Activated CD4-positive, alpha-beta memory T cell treated with anti-CD3 and anti-CD28 coated beads, Interleukin-2, amount 10 ng/mL, durations not matched to agents 7 days and 5 days (primary cell): ENCODE measurements at regions of chr16 and their contacts with region 1.

Region 1: DNA sequence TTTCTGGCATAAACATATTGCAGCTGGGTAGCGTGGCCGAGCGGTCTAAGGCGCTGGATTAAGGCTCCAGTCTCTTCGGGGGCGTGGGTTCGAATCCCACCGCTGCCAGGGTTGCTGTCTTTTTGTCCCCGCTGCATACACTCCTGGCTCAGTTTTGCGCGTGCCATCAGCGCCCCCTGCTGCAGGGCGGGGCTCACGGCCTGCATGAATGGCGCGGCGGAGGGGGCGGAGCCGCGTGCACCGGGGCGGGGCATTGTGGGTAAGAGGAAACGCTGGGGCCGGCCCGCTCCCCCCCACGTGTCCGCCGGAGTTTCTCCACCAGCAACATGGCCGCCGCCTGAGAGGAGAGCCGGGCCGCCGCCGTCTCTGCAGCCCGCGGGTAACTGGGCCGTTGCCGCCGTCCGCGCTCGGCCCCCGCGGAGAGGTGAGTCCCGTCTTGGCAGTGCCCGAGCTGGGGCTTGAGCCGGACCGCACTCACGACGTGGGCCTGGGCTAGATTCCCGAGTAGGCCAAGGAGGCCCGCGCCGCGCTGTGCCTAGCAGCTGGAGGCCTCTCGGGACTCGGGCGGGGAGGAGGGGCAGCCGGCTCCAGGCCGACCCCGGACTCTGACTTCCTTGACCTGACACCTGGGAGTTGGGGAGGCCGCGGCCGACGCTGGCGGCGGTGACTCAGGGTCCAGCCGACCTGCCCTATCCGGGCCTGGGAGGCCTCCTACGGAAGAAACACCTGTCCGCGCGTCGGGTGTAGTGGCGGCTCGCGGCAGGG is at the start of gene POLR3E:
- DNase-seq: peak; percentile 100
- H3K4me3 Mint-ChIP-seq: peak within 1 kb of the TSS; percentile 91
- H3K27ac Mint-ChIP-seq: peak within 1 kb of the TSS; percentile 98
- H3K4me1 Mint-ChIP-seq: peaks cover 41% of the 10 kb centered on the region
- H3K27me3 Mint-ChIP-seq: no peaks in the 10 kb centered on the region
- total RNA-seq, gene POLR3E: 50.7 TPM

Region 2: DNA sequence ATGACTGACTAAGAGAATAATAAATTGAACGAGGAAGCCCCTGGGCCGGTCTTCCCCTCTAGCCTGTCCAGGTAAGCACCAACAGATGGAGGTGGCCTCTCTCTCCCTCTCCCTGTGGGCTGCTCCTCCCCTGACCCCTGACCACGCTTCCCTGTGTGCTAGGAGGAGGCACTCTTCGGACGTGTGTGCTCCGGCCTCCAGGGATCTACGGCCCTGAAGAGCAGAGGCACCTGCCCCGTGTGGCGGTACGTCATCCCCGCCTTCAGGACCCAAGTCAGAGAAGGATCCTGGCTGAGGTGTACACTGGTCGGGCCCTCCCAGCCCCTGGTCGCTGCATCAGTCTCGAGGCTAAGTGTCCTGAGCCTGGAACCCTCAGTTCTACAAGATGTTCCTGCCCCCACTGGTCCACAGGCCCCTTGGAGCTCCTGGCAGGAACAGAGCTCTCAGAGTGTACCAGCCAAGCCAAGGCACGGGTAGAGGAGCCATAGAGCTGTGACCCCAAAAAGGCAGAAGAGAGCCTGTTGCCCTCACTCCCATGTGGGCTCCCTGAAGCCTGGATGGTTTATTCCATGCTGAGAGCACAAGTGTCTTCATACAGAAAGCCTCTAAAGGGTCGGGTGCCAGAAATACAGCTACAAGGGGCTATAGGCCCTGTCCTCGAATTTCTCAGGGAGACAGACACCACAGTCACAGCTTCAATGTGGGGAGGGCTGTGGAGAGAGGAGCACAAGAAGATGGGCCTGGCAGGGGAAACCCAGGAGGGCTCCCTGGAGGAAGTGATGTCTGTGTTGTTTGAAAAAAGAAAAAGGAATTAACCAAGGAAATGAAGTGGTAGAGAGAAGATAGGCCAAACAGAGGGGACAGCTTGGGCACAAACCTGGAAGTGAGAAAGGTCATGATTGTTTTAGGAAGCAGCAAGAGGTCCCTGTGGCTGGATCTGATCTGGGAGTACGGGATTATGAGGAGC is 119.0 kb before region 1 on chr16:
- CTCF ChIA-PET with region 1: no interaction called
- POLR2A ChIA-PET with region 1: no interaction called
- DNase-seq: no peak
- H3K4me3 Mint-ChIP-seq: no peak overlapping the region
- H3K27ac Mint-ChIP-seq: no peak overlapping the region
- H3K4me1 Mint-ChIP-seq: no peaks in the 10 kb centered on the region
- H3K27me3 Mint-ChIP-seq: no peaks in the 10 kb centered on the region

Region 3: DNA sequence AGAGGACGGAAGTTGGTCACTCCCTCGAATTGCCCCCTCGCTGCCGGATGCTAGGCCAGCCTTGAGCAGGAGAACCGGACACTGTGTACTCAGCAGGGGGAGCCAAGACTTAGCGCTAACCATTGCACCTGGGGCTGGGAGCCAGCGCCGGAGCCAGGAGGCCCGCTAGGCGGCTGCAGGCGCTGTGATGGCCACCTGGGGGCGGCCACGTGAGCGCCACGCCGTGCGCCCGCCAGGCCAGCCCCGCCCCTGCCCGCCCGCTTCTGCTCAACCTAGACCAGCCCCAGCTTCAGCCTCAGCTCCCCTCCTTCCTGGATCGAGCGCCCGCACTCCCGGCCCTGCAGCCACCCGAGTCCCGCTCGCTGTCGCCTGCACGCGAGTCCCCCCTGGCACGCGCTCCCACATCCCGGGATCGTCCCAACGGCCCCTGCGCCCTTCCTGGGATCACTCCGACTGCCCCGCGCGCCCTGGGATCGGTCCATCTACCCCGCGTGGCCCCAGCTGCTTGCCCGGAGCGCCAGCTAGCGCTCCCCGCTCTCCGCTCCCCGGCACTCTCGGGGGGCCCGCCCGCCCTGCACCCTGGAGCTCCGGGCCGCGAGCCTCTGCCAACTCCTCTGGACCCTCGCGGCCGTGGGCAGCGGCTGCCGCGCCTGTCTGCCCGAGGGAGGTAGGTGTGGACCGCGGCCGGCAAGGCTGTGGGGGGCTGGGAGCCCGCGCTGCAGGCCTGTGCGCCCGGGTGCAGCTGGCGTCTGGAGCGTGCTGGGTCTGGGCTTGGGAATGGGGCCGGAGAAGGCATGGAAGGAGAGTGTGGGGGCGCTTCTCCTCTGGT is 91.1 kb before region 1 on chr16 and contains the start of gene EEF2K:
- CTCF ChIA-PET with region 1: interaction called, 81 read pairs
- POLR2A ChIA-PET with region 1: interaction called, 49 read pairs
- DNase-seq: peak; percentile 89
- H3K4me3 Mint-ChIP-seq: peak within 1 kb of the TSS; percentile 99
- H3K27ac Mint-ChIP-seq: peak within 1 kb of the TSS; percentile 83
- H3K4me1 Mint-ChIP-seq: peaks cover 44% of the 10 kb centered on the region
- H3K27me3 Mint-ChIP-seq: no peaks in the 10 kb centered on the region
- total RNA-seq, gene EEF2K: 22.1 to 24.8 TPM

Region 4: GRCh38 chr16:22240023-22240710 is 57.1 kb before region 1 on chr16:
- CTCF ChIA-PET with region 1: interaction called, 8 read pairs
- POLR2A ChIA-PET with region 1: interaction called, 13 read pairs
- DNase-seq: no peak
- H3K4me3 Mint-ChIP-seq: no peak overlapping the region
- H3K27ac Mint-ChIP-seq: peak overlapping the region; percentile 97
- H3K4me1 Mint-ChIP-seq: peaks cover 32% of the 10 kb centered on the region
- H3K27me3 Mint-ChIP-seq: no peaks in the 10 kb centered on the region

Region 5: GRCh38 chr16:22308824-22309520 is 11.7 kb after region 1 on chr16:
- CTCF ChIA-PET with region 1: interaction called, 10 read pairs
- POLR2A ChIA-PET with region 1: interaction called, 4 read pairs
- DNase-seq: no peak
- H3K4me3 Mint-ChIP-seq: no peak overlapping the region
- H3K27ac Mint-ChIP-seq: no peak overlapping the region
- H3K4me1 Mint-ChIP-seq: no peaks in the 10 kb centered on the region
- H3K27me3 Mint-ChIP-seq: no peaks in the 10 kb centered on the region

Region 6: DNA sequence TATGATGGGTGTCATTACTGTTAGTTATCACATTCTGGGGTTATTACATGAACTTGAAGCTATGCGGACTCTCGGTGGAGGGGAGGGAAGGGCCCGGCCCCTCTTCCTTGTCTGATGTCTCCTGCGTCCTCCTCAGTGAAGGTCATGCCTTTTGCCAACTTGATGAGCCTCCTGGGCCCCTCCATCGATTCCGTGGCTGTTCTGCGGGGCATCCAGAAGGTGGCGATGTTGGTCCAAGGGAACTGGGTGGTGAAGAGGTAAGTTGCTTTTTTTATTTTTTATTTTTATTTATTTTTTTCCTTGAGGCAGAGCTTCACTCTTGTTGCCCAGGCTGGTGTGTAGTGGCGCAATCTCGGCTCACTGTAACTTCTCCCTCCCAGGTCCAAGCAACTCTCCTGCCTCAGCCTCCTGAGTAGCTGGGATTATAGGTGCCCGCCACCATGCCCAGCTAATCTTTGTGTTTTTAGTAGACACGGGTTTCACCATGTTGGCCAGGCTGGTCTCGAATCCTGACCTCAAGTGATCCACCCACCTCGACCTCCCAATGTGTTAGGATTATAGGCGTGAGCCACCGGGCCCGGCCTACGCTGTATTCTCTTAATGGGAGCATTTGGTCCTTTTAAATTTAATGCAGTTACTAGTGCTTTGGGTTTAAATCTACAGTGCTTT is 21.5 kb after region 1 on chr16:
- CTCF ChIA-PET with region 1: interaction called, 11 read pairs
- POLR2A ChIA-PET with region 1: interaction called, 3 read pairs
- DNase-seq: peak; percentile 70
- H3K4me3 Mint-ChIP-seq: no peak overlapping the region
- H3K27ac Mint-ChIP-seq: no peak overlapping the region
- H3K4me1 Mint-ChIP-seq: peaks cover 4% of the 10 kb centered on the region
- H3K27me3 Mint-ChIP-seq: no peaks in the 10 kb centered on the region

Region 7: DNA sequence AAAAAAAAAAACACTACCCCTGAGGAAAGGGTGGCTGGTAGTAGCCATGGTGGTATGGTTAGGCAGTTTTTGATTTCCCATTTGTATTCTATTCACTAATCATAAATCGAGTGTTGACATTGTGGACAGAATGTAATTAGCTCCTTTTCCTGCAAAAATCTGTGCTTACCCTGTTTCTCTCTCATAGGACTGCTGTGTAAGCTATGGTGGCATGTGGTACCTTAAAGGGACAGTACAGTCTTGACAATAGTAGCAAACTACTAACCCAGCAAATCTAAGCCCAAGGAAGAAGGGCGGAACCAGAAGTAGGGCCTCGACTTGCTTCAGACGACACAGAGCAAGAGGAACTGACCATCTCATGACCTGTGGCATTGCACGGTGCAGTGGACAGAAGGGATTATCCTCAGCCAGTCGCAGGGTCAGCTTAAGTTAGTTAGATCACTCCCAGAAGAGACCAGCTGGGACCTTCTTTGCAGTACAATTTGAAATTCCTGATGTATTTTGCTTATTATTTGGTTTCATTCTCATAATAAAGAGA is 36.2 kb after region 1 on chr16:
- CTCF ChIA-PET with region 1: no interaction called
- POLR2A ChIA-PET with region 1: no interaction called
- DNase-seq: no peak
- H3K4me3 Mint-ChIP-seq: no peak overlapping the region
- H3K27ac Mint-ChIP-seq: no peak overlapping the region
- H3K4me1 Mint-ChIP-seq: peaks cover 9% of the 10 kb centered on the region
- H3K27me3 Mint-ChIP-seq: no peaks in the 10 kb centered on the region

Region 8: GRCh38 chr16:22424161-22424937 is 127.1 kb after region 1 on chr16:
- CTCF ChIA-PET with region 1: no interaction called
- POLR2A ChIA-PET with region 1: no interaction called
- DNase-seq: no peak
- H3K4me3 Mint-ChIP-seq: no peak overlapping the region
- H3K27ac Mint-ChIP-seq: no peak overlapping the region
- H3K4me1 Mint-ChIP-seq: no peaks in the 10 kb centered on the region
- H3K27me3 Mint-ChIP-seq: no peaks in the 10 kb centered on the region

Region 9: DNA sequence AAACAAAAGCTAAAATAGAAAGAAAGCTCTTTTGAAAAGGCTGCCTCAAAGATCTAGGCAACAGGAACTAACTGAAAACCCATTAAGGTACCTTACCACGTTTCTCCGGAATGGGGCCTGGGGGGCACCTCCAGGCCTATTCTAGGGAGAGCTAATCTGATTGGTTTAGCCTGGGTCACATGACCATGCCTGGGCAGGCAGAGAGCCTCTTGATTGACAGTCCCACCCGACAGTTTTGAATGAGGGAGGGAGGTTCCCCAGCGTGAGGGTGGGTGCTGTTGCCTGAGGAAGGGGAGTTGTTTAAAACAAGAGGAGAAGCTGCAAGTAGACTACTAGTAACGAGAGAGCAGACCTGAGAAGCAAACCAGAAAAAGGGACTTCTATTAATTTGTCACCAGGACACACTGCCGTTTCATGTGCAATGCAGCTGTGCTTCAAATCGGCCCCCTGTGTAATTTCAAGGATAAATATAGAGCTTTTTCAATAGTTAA is 373.3 kb after region 1 on chr16:
- CTCF ChIA-PET with region 1: no interaction called
- POLR2A ChIA-PET with region 1: no interaction called
- DNase-seq: no peak
- H3K4me3 Mint-ChIP-seq: no peak overlapping the region
- H3K27ac Mint-ChIP-seq: no peak overlapping the region
- H3K4me1 Mint-ChIP-seq: no peaks in the 10 kb centered on the region
- H3K27me3 Mint-ChIP-seq: no peaks in the 10 kb centered on the region